ENCODE measurements at regions of chr16 and their contacts with region 1.

Region 1: GRCh38 chr16:14529010-14529669 is 100.9 kb downstream of the PARN start:
- DNase-seq: peak; percentile 15 to 72 (median 59)
- ATAC-seq: peak; percentile 73
- H3K4me3 ChIP-seq: no peak overlapping the region
- H3K4me3 Mint-ChIP-seq: no peak overlapping the region
- H3K27ac ChIP-seq: no peak overlapping the region
- H3K27ac Mint-ChIP-seq: peak overlapping the region in 1 of 9 donors; percentile 9
- H3K4me1 ChIP-seq: no peaks in the 10 kb centered on the region
- H3K4me1 Mint-ChIP-seq: peaks cover 0 to 12% (median 4%) of the 10 kb centered on the region in 7 donors
- H3K27me3 ChIP-seq: no peaks in the 10 kb centered on the region
- H3K27me3 Mint-ChIP-seq: no peaks in the 10 kb centered on the region

Region 2: GRCh38 chr16:14249291-14250032 is 279.7 kb before region 1 on chr16:
- CTCF ChIA-PET with region 1: interaction called, 6 read pairs
- POLR2A ChIA-PET with region 1: no interaction called
- intact Hi-C with region 1: loop called (anchors 1 kb)
- DNase-seq: peak in 8 of 9 donors; percentile 25 to 66 (median 49)
- ATAC-seq: peak; percentile 59
- H3K4me3 ChIP-seq: no peak overlapping the region
- H3K4me3 Mint-ChIP-seq: no peak overlapping the region
- H3K27ac ChIP-seq: no peak overlapping the region
- H3K27ac Mint-ChIP-seq: no peak overlapping the region
- H3K4me1 ChIP-seq: no peaks in the 10 kb centered on the region
- H3K4me1 Mint-ChIP-seq: no peaks in the 10 kb centered on the region
- H3K27me3 ChIP-seq: no peaks in the 10 kb centered on the region
- H3K27me3 Mint-ChIP-seq: no peaks in the 10 kb centered on the region

Region 3: GRCh38 chr16:14436401-14436955 is 92.7 kb before region 1 on chr16:
- CTCF ChIA-PET with region 1: no interaction called
- POLR2A ChIA-PET with region 1: no interaction called
- intact Hi-C with region 1: loop called in 1 of 2 experiments (anchors 10 kb)
- DNase-seq: peak in 6 of 9 donors; percentile 35 to 65 (median 46)
- ATAC-seq: peak; percentile 70
- H3K4me3 ChIP-seq: no peak overlapping the region
- H3K4me3 Mint-ChIP-seq: peak overlapping the region; percentile 60 to 82 (median 74)
- H3K27ac ChIP-seq: peak overlapping the region; percentile 57
- H3K27ac Mint-ChIP-seq: peak overlapping the region in 8 of 9 donors; percentile 77 to 94 (median 90)
- H3K4me1 ChIP-seq: peaks cover 12 to 17% of the 10 kb centered on the region in 2 donors
- H3K4me1 Mint-ChIP-seq: peaks cover 13 to 50% (median 45%) of the 10 kb centered on the region in 7 donors
- H3K27me3 ChIP-seq: no peaks in the 10 kb centered on the region
- H3K27me3 Mint-ChIP-seq: no peaks in the 10 kb centered on the region